Activated CD8-positive, alpha-beta T cell treated with anti-CD3 and anti-CD28 coated beads for 36 hours (primary cell): ENCODE measurements at regions of chr17 and their contacts with region 1.

Region 1: DNA sequence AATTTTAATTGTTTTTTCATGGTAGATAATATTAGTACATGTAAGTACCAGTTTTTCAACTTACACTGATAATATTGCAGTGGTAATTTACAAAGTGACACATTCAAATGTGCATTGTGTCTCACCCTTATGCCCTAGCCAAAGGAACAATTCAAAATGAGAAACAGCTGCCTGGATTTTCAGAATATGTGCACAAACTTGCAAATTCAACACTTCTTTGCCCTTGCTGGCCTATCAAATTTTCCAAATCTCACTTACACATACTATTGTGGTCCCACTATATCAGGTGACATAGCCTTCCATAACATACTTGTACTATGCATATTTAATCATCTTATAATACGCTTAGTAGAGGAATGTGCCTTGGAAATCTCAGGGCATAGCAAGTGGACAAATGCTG is 32.6 kb upstream of the LRRC37A3 start:
- DNase-seq: no peak
- ATAC-seq: no peak
- H3K4me3 Mint-ChIP-seq: no peak overlapping the region
- H3K27ac Mint-ChIP-seq: no peak overlapping the region
- H3K4me1 Mint-ChIP-seq: no peaks in the 10 kb centered on the region
- H3K27me3 Mint-ChIP-seq: no peaks in the 10 kb centered on the region
- CTCF ChIP-seq: no peak

Region 2: DNA sequence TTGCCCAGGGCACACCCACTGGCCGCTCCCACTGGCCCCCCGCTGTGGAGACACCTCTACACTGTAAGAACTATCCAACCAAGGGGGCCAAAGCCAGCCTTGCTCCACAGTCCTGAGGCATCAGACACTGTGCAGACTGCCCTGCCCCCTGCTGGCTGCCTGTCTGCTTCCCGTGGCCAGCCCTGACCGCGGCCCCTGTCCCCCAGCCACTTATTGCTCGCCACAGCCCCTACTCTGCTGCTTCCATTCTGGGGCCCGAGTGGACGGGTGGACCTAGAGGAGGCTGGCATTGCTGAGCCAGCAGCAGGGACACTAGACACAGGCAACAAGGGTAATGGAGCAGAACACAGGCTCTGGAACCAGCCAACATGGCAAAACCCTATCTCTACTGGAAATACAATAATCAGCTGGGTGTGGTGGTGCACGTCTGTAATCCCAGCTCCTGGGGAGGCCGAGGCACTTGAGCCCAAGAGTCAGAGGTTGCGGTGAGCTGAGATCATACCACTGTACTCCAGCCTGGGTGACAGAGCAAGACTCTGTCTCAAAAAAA is 12.9 kb before region 1 on chr17:
- CTCF ChIA-PET with region 1: interaction called, 10 read pairs
- POLR2A ChIA-PET with region 1: no interaction called
- intact Hi-C with region 1: no loop called
- DNase-seq: peak; percentile 73
- ATAC-seq: peak; percentile 86
- H3K4me3 Mint-ChIP-seq: no peak overlapping the region
- H3K27ac Mint-ChIP-seq: no peak overlapping the region
- H3K4me1 Mint-ChIP-seq: no peaks in the 10 kb centered on the region
- H3K27me3 Mint-ChIP-seq: no peaks in the 10 kb centered on the region
- CTCF ChIP-seq: peak; percentile 81

Region 3: DNA sequence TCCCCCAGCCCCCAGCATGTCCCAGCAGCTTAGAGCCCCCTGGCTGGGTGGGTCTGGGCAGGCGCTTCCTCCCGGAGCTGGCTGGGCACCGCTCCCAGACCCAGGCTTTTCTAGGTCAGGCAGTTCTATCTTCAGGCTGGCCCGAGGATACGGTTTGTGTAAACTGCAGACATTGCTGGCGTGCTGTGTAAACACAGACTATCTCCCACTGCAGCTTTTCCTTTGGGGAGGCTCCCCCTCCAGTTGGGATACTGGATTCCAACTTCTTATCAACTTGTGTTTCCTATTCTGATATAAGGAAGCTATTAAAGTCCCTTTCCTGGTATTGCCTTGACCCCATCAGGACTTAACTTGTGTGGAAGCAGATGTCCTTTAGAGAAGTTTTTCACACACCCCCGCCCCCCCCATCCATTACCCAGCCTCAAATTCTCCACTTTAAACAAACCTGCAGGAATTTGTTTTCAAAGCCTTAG is 122.9 kb after region 1 on chr17:
- CTCF ChIA-PET with region 1: no interaction called
- POLR2A ChIA-PET with region 1: no interaction called
- intact Hi-C with region 1: no loop called
- DNase-seq: no peak
- ATAC-seq: no peak
- H3K4me3 Mint-ChIP-seq: no peak overlapping the region
- H3K27ac Mint-ChIP-seq: no peak overlapping the region
- H3K4me1 Mint-ChIP-seq: no peaks in the 10 kb centered on the region
- H3K27me3 Mint-ChIP-seq: no peaks in the 10 kb centered on the region
- CTCF ChIP-seq: no peak